Activated naive CD4-positive, alpha-beta T cell treated with anti-CD3 and anti-CD28 coated beads for 36 hours (primary cell): ENCODE measurements at regions of chr3 and their contacts with region 1.

Region 1: GRCh38 chr3:155854141-155854940 is at the start of gene SLC33A1:
- DNase-seq: peak; percentile 99
- H3K4me3 Mint-ChIP-seq: peak within 1 kb of the TSS; percentile 98
- H3K27ac Mint-ChIP-seq: peak within 1 kb of the TSS; percentile 99
- H3K4me1 Mint-ChIP-seq: peaks cover 28% of the 10 kb centered on the region
- H3K27me3 Mint-ChIP-seq: no peaks in the 10 kb centered on the region
- total RNA-seq, gene SLC33A1: 14.7 to 15.2 TPM

Region 2: DNA sequence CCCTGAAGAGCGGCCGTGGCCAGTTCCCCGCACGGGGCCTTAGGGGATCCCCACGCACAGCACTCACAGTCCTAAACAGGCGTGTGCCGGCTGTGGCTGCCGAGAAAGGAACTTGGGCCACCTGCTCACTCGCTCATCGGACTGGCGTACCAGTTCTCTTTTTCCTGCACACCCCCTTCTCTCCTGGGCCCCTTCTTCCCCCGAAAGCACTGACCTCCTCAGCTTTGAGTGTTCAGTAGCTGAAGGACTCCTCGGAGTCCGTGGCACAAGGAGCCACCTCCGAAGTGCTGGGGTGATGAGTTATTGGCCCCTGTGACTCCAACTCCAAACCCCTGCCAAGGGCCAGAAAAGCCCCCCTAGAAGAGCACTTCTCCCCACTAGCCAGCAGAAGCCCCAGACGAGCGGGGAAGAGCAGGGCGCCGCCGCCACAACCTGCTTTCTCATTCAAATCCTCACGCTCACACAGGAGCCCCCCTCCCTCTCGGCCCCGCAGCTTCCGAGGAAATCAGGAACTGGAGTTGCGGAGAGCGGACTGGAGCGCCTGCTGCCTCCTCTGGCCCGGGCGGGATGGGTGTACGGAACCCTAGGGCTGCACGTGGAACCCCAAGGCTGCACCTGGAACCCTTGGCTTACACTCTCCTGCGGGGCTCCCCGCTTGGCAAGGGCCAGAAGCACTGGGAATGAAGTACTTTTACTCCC is 109.6 kb before region 1 on chr3 and contains the start of gene PLCH1:
- CTCF ChIA-PET with region 1: no interaction called
- intact Hi-C with region 1: loop called (anchors 1 kb)
- DNase-seq: peak; percentile 74
- H3K4me3 Mint-ChIP-seq: peak within 1 kb of the TSS; percentile 83
- H3K27ac Mint-ChIP-seq: no peak within 1 kb of the TSS
- H3K4me1 Mint-ChIP-seq: peaks cover 9% of the 10 kb centered on the region
- H3K27me3 Mint-ChIP-seq: peaks cover 30% of the 10 kb centered on the region
- total RNA-seq, gene PLCH1: 0.21 to 0.27 TPM

Region 3: DNA sequence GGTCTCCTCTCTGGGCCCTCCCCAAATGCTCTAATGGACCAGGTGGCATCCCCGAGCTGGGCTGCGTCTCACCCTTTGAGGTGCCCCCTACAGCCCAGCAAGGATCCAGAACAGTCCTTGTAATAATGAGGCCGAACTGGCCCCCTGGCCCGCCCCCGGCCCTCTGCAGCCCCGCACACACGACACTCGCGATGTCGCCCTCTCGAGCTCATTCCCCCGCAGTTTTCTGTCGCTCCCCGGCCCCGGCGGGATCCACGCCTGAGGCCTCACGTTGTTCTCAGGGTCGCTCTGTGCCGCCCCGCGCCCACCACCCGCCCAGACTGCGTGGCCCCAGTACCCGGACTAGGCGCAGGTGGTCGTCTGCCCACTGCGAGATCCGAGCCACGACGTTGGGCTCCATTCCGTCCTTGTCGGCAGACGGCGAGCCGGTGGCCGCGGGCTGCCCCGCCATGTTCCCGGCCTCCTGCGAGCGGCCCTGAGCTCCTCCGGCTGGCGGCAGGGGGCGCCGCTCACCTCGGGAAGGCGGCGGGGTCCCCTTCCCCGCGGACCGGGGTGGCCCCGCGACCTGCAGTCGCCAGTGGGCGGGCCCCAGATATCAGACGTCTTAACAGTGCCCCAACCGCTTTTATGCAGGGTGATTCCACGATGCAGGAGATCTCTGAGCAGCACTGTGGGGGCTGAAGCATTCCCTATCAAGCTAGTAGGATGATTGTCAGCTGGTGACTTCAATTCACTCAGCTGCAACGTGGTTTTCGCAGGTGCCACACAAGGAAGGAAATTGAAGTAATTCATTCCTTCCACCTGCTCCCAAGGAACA is 48.3 kb before region 1 on chr3 and contains the start of gene C3orf33:
- CTCF ChIA-PET with region 1: interaction called, 32 read pairs
- intact Hi-C with region 1: loop called (anchors 1 kb)
- DNase-seq: peak; percentile 78
- H3K4me3 Mint-ChIP-seq: peak within 1 kb of the TSS; percentile 85
- H3K27ac Mint-ChIP-seq: peak within 1 kb of the TSS; percentile 58
- H3K4me1 Mint-ChIP-seq: peaks cover 15% of the 10 kb centered on the region
- H3K27me3 Mint-ChIP-seq: no peaks in the 10 kb centered on the region
- total RNA-seq, gene C3orf33: 2.7 to 3.2 TPM

Region 4: GRCh38 chr3:156230267-156230900 is 376.0 kb after region 1 on chr3:
- CTCF ChIA-PET with region 1: no interaction called
- intact Hi-C with region 1: no loop called
- DNase-seq: no peak
- H3K4me3 Mint-ChIP-seq: no peak overlapping the region
- H3K27ac Mint-ChIP-seq: no peak overlapping the region
- H3K4me1 Mint-ChIP-seq: no peaks in the 10 kb centered on the region
- H3K27me3 Mint-ChIP-seq: peaks cover 18% of the 10 kb centered on the region

Region 5: DNA sequence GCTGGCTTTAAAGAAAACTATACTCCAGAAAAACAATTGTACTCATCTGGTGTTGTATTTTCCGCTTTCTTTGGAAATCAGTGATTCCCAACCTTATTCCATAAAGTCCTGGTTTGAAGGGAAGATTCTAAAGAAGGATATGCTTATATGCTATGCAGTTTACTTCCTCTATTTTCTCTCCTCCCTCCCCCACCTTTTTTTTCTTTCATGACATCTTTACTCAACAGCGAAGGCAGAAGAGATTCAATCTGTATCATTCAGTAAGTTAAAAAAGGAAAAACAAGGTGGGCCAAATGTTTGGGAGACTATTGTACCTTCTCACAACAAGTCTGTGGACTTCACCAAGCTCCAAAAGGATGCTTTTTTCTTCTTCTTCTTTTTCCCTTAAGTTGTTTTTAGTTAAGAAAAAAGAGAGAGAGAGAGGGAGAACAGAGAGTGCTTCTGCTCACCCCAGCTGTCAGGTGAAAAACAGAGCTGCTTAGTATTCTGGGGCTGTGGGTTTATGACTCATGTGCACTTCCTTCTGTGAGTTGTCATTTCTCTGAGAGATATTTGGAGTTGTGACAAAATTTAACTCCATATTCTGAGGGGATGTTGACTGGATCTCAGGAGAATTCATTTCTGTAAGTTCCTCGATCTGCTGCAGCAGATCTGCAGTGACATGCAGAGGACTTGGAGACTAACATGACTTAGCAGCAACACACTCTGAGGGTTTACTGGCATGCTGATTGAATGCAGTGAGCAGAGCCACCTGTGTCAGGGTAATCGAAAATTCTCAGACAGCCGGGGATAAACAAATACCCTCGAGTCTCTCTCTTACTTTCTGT is 629.8 kb after region 1 on chr3:
- CTCF ChIA-PET with region 1: no interaction called
- intact Hi-C with region 1: loop called (anchors 2 kb)
- DNase-seq: peak; percentile 70
- H3K4me3 Mint-ChIP-seq: peak overlapping the region; percentile 51
- H3K27ac Mint-ChIP-seq: peak overlapping the region; percentile 81
- H3K4me1 Mint-ChIP-seq: peaks cover 42% of the 10 kb centered on the region
- H3K27me3 Mint-ChIP-seq: no peaks in the 10 kb centered on the region

Region 6: DNA sequence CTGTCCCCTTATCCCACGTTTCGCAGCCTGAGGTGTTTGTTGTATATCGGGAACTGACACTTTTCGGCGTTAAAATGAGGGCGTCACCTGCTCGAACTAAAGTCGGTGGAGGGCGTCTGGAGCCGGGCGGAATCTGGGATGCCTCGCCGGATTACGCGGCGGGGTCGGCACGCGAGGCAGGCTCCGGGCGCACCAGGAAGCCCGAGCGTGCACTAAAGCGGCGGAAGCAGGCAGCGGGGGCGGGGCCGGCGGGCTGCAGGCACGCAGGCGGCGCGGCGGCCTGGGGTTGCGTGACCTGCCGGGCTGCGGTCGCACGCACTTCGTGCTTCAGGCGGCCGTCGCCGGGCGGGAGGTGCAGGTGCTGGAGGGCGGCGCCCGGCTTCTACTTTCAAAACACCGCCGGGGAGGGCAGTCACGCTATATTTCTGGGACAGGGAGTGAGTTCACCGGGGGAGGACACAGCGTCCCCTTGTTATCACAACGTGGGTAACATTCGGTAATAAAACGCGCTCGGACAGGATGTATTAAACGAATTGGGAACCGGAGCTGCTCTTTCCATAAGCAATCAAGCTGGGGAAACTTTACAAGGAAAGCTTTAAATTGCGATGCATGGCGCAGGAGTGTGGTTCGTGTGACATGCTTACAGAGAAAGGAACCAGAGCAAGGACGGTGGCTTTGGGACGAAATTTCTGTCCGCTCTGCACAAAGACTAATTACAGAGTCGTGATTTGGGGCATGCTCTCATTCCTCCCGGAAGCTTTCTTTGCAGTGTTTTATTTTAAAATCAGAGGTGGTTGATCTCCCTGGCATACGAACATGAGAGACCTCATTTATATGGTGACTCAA is 962.7 kb after region 1 on chr3:
- CTCF ChIA-PET with region 1: no interaction called
- intact Hi-C with region 1: loop called (anchors 5 kb)
- DNase-seq: peak; percentile 90
- H3K4me3 Mint-ChIP-seq: peak overlapping the region; percentile 90
- H3K27ac Mint-ChIP-seq: peak overlapping the region; percentile 88
- H3K4me1 Mint-ChIP-seq: peaks cover 22% of the 10 kb centered on the region
- H3K27me3 Mint-ChIP-seq: no peaks in the 10 kb centered on the region

Region 7: GRCh38 chr3:157159762-157160657 is 1305.7 kb after region 1 on chr3 and contains the start of gene CCNL1:
- CTCF ChIA-PET with region 1: no interaction called
- intact Hi-C with region 1: loop called (anchors 1 kb)
- DNase-seq: peak; percentile 94
- H3K4me3 Mint-ChIP-seq: peak within 1 kb of the TSS; percentile 93
- H3K27ac Mint-ChIP-seq: peak within 1 kb of the TSS; percentile 99
- H3K4me1 Mint-ChIP-seq: peaks cover 43% of the 10 kb centered on the region
- H3K27me3 Mint-ChIP-seq: no peaks in the 10 kb centered on the region
- total RNA-seq, gene CCNL1: 206 to 214 TPM